ENCODE measurements at regions of chr17 and their contacts with region 1.

Region 1: DNA sequence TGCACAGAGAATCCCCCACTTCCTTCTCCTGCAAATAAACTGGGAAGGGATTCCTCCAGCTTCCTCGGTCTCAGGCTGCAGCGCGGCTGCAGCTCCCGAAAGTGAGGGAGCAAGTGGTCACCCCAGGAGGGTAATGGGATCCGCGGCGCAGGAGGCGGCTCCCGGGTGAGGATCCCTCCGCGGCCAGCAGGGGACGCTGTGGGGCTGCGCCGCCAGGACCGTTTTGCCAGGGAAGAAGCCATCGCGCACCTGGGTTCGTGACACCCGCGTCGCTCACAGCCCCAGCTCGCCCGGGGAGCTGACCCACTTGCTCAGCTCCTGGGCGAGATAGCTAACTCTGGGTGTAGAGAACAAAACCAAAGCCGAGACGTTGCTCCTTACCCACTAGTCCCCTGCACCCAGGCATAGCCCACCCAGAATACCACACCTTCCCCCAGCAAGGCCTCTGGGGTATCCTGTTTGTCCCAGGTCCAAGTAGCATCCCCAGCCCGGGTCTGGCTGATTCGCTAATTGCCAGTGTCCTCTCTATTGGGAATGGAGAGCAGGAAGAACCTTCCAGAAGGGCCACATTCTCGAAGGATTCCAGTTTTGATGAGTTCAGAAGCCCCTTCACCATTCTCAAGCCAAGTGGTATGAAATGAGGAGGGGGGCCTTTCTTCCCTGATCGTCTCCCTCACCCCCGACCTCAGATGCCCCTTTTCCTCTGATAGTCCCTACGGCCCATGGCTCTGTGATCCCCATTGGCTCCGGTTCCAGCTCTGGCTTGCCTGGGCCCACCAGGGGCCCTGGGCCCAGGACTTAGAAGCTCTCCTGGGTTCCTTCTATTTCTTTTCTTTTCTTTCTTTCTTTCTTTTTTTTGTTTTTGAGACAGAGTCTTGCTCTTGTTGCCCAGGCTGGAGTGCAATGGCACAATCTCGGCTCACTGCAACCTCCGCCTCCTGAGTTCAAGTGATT is 14.1 kb downstream of the CYGB start:
- DNase-seq: peak in 1 of 2 experiments; percentile 83
- H3K4me3 ChIP-seq: no peak overlapping the region
- H3K27ac ChIP-seq: no peak overlapping the region
- H3K4me1 ChIP-seq: no peaks in the 10 kb centered on the region; the same call in 1 of the 2 replicates
- H3K27me3 ChIP-seq: no peaks in the 10 kb centered on the region
- CTCF ChIP-seq: peak; percentile 95

Region 2: GRCh38 chr17:76547184-76547641 is 23.9 kb after region 1 on chr17:
- CTCF ChIA-PET with region 1: interaction called, 5 read pairs
- POLR2A ChIA-PET with region 1: interaction called, 3 read pairs
- intact Hi-C with region 1: loop called (anchors 1 kb)
- DNase-seq: peak in 1 of 2 experiments; percentile 47
- H3K4me3 ChIP-seq: no peak overlapping the region
- H3K27ac ChIP-seq: no peak overlapping the region
- H3K4me1 ChIP-seq: peaks cover 15% of the 10 kb centered on the region
- H3K27me3 ChIP-seq: no peaks in the 10 kb centered on the region
- CTCF ChIP-seq: peak; percentile 69

Region 3: DNA sequence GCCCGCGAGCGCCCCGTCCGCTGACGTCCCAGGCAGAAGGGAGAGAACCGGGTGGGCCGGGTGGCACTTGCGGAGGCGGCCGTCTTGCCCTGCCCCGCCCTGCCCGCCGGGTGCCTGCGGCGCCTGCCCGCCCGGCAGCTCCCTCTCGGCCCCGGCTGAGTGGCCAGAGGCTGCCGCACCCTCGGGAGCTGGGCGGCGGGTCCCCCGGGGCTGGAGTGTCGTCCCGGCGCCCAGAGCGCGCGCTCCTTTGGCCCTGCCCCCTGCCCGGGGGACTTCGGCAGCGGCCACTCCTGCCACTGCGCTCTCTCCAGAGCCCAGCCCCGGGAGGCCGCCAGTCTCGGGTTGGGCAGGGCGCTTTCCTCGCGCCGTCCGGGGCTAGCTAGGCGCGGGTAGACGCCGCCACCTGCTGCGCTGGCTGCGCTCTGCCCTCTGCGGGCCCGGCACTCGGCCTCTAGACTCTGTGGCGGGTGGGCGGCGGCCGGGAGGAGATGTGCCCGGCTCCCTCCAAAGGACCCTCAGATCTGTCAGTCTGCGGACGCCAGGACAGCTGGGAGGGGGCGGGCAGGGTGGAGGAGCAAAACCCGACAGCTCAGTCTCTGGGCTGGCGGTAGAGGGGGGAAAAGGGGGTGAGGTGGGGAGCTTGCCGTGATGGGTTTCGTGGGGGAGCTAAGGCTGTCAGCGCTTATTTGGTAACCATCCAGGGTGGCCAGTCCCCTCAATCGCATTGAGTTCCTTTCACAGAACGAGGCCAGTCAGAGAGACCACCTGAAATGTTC is 62.6 kb after region 1 on chr17 and contains the start of gene ST6GALNAC2:
- CTCF ChIA-PET with region 1: interaction called, 13 read pairs
- POLR2A ChIA-PET with region 1: no interaction called
- intact Hi-C with region 1: no loop called
- DNase-seq: peak; percentile 59 to 94
- H3K4me3 ChIP-seq: peak within 1 kb of the TSS; percentile 52; the same call in 1 of the 2 replicates
- H3K27ac ChIP-seq: no peak within 1 kb of the TSS
- H3K4me1 ChIP-seq: no peaks in the 10 kb centered on the region
- H3K27me3 ChIP-seq: no peaks in the 10 kb centered on the region
- CTCF ChIP-seq: no peak; the same call in 1 of the 2 replicates
- total RNA-seq, gene ST6GALNAC2: 15.5 and 18.7 TPM in 2 replicates

Region 4: GRCh38 chr17:76671123-76671911 is 148.0 kb after region 1 on chr17:
- CTCF ChIA-PET with region 1: no interaction called
- POLR2A ChIA-PET with region 1: no interaction called
- intact Hi-C with region 1: loop called (anchors 5 kb)
- DNase-seq: peak; percentile 96 to 99
- H3K4me3 ChIP-seq: peak overlapping the region; percentile 69; the same call in 1 of the 2 replicates
- H3K27ac ChIP-seq: peak overlapping the region; percentile 61
- H3K4me1 ChIP-seq: peaks cover 9% of the 10 kb centered on the region
- H3K27me3 ChIP-seq: no peaks in the 10 kb centered on the region
- CTCF ChIP-seq: no peak

Region 5: GRCh38 chr17:76714822-76715495 is 191.6 kb after region 1 on chr17:
- CTCF ChIA-PET with region 1: no interaction called
- POLR2A ChIA-PET with region 1: no interaction called
- intact Hi-C with region 1: loop called (anchors 1 kb)
- DNase-seq: peak in 1 of 2 experiments; percentile 61
- H3K4me3 ChIP-seq: no peak overlapping the region
- H3K27ac ChIP-seq: no peak overlapping the region
- H3K4me1 ChIP-seq: 0 out of 2 replicates have a peak, but pooled peaks cover 6% of the 10 kb centered on the region
- H3K27me3 ChIP-seq: no peaks in the 10 kb centered on the region
- CTCF ChIP-seq: peak; percentile 86

Measured in PC-9 (cell line).